ENCODE measurements at regions of chr2 and their contacts with region 1.

Region 1: DNA sequence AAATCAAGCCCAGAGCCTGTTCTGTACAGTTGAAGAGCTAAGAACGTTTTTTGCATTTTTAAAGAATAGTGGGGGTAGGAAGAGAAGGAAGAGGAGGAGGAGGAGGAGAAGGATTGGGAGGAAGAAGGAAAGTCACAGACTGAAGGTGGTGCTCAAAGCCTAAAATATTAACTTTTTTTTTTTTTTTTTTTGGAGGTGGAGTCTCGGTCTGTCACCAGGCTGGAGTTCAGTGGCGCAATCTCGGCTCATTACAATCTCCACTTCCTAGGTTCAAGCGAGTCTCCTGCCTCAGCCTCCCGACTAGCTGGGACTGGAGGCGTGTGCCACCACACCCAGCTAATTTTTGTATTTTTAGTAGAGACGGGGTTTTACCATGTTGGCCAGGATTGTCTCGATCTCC is 18.3 kb upstream of the KLHL29 start:
- DNase-seq: peak in 1 of 2 experiments; percentile 25
- ATAC-seq: peak in 1 of 2 experiments; percentile 75; a peak in 3 of 6 replicates
- H3K4me3 ChIP-seq: peak overlapping the region; percentile 12; the same call in 2 of the 3 replicates
- H3K27ac ChIP-seq: no peak overlapping the region
- H3K4me1 ChIP-seq: no peaks in the 10 kb centered on the region
- CTCF ChIP-seq: peak; percentile 23; the same call in 2 of the 3 replicates
- EP300 ChIP-seq: no peak
- POLR2A ChIP-seq: no peak
- RAD21 ChIP-seq: peak; percentile 33 to 54; a peak in 4 of 5 replicates

Region 2: DNA sequence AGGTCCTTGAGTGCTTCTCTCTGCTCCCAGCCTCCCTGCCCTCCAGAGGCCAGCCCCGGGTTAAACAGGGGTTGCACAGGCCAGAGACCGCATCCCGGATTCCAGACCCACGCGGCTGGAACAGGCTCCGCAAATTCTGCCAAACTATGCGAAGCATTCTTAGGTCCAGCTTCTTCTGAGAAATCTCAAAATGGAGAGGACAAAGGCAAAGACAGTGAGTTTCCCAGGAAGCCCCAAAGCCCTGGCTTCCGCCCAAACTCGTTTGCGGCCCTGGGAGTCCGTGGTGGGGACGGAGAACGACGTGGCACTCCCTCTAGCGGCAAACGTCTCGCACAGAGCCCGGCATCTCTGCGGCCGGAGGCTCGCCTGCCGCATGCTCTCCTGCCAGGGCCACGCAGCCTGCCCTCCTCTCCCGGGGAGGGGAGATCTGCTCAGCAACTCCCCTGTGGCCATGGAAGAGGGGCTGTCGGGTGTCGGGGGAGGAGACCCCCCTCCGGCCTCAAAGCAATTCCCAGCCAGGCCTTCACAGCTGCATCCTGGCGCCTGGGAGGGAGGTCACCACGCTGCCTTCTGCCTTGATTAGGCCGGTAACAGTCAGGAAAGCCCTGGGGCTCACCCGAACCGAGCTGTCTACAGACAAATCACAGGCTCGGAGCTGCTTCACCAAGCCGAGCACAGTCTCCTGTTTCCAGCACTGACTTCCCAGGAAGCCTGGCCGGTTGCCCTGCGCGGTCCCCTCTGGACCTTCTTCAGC is 15.2 kb before region 1 on chr2:
- CTCF ChIA-PET with region 1: interaction called, 16 read pairs
- POLR2A ChIA-PET with region 1: no interaction called
- DNase-seq: peak; percentile 69 to 85
- ATAC-seq: peak; percentile 98 to 99
- H3K4me3 ChIP-seq: no peak overlapping the region
- H3K27ac ChIP-seq: peak overlapping the region in 1 of 2 experiments; percentile 73; a peak in 2 of 6 replicates
- H3K4me1 ChIP-seq: no peaks in the 10 kb centered on the region
- CTCF ChIP-seq: peak; percentile 84
- EP300 ChIP-seq: no peak
- POLR2A ChIP-seq: no peak
- RAD21 ChIP-seq: peak; percentile 77 to 81

Region 3: GRCh38 chr2:23384551-23385349 is 18.0 kb after region 1 on chr2 and contains the start of gene KLHL29:
- CTCF ChIA-PET with region 1: no interaction called
- POLR2A ChIA-PET with region 1: no interaction called
- DNase-seq: peak; percentile 62 to 89
- ATAC-seq: peak; percentile 58 to 66
- H3K4me3 ChIP-seq: peak within 1 kb of the TSS; percentile 73
- H3K27ac ChIP-seq: peak within 1 kb of the TSS; percentile 75 to 90
- H3K4me1 ChIP-seq: peaks cover 14% of the 10 kb centered on the region
- CTCF ChIP-seq: no peak
- EP300 ChIP-seq: no peak
- POLR2A ChIP-seq: peak; percentile 83
- RAD21 ChIP-seq: no peak
- polyA plus RNA-seq, gene KLHL29: 1.3 and 1.6 TPM in 2 replicates

Region 4: GRCh38 chr2:23745726-23746105 is 379.0 kb after region 1 on chr2:
- CTCF ChIA-PET with region 1: interaction called, 10 read pairs
- POLR2A ChIA-PET with region 1: no interaction called
- DNase-seq: peak in 1 of 2 experiments; percentile 9
- ATAC-seq: peak; percentile 30 to 44; a peak in 4 of 6 replicates
- H3K4me3 ChIP-seq: no peak overlapping the region
- H3K27ac ChIP-seq: no peak overlapping the region; a peak in 1 of 6 replicates
- H3K4me1 ChIP-seq: peaks cover 6% of the 10 kb centered on the region; the same call in 1 of the 3 replicates
- CTCF ChIP-seq: no peak
- EP300 ChIP-seq: no peak
- POLR2A ChIP-seq: no peak
- RAD21 ChIP-seq: no peak

Measured in A549 (cell line).